AG04449 (cell line): ENCODE measurements at regions of chr18 and their contacts with region 1.

Region 1: GRCh38 chr18:63843008-63843407 is 44.5 kb upstream of the SERPINB2 start:
- DNase-seq: no peak
- H3K4me3 ChIP-seq: no peak overlapping the region
- CTCF ChIP-seq: no peak

Region 2: GRCh38 chr18:63523660-63524059 is 319.3 kb before region 1 on chr18:
- CTCF ChIA-PET with region 1: interaction called, 555 read pairs
- POLR2A ChIA-PET with region 1: interaction called, 3 read pairs
- DNase-seq: no peak
- H3K4me3 ChIP-seq: no peak overlapping the region
- CTCF ChIP-seq: peak; percentile 25